Activated T-helper 1 cell treated with anti-CD3 and anti-CD28 coated beads, Interleukin-12 subunit alpha, Interleukin-12 subunit beta, Interleukin-2, Interleukin-4 antibody, amounts not matched to agents 30 ng/mL and 10 ng/mL and 1 ng/mL, durations not matched to agents 14 hours and 24 hours and 36 hours (primary cell): ENCODE measurements at regions of chr4 and their contacts with region 1.

Region 1: GRCh38 chr4:112765317-112765975 is 128.5 kb downstream of the LARP7 start:
- DNase-seq: no peak
- H3K4me3 Mint-ChIP-seq: no peak overlapping the region
- H3K27ac Mint-ChIP-seq: no peak overlapping the region
- H3K4me1 Mint-ChIP-seq: peaks cover 5% of the 10 kb centered on the region
- H3K27me3 Mint-ChIP-seq: peaks cover 6% of the 10 kb centered on the region

Region 2: GRCh38 chr4:112099701-112100297 is 665.6 kb before region 1 on chr4:
- intact Hi-C with region 1: loop called (anchors 5 kb)
- DNase-seq: no peak
- H3K4me3 Mint-ChIP-seq: no peak overlapping the region
- H3K27ac Mint-ChIP-seq: no peak overlapping the region
- H3K4me1 Mint-ChIP-seq: peaks cover 20% of the 10 kb centered on the region
- H3K27me3 Mint-ChIP-seq: peaks cover 22% of the 10 kb centered on the region

Region 3: DNA sequence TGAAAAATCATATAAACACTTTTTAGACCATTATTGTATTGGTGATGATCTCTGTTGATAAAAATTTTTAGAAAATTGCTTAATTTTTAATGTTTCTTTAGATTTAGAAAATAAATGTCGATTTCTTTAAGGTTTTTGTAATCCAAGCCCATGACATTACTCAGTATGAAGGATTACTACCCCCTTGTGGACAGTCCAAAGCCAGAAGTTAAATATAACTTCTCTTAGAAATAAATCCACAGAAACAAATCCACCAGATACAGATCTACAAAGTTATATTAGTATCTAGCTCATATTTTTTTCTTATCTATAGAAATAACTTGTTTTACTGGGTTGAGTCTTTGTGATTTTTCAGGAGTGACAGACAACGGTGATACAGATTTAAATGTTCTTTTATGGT is 498.6 kb before region 1 on chr4:
- intact Hi-C with region 1: no loop called
- DNase-seq: no peak
- H3K4me3 Mint-ChIP-seq: no peak overlapping the region
- H3K27ac Mint-ChIP-seq: no peak overlapping the region
- H3K4me1 Mint-ChIP-seq: peaks cover 14% of the 10 kb centered on the region
- H3K27me3 Mint-ChIP-seq: no peaks in the 10 kb centered on the region

Region 4: DNA sequence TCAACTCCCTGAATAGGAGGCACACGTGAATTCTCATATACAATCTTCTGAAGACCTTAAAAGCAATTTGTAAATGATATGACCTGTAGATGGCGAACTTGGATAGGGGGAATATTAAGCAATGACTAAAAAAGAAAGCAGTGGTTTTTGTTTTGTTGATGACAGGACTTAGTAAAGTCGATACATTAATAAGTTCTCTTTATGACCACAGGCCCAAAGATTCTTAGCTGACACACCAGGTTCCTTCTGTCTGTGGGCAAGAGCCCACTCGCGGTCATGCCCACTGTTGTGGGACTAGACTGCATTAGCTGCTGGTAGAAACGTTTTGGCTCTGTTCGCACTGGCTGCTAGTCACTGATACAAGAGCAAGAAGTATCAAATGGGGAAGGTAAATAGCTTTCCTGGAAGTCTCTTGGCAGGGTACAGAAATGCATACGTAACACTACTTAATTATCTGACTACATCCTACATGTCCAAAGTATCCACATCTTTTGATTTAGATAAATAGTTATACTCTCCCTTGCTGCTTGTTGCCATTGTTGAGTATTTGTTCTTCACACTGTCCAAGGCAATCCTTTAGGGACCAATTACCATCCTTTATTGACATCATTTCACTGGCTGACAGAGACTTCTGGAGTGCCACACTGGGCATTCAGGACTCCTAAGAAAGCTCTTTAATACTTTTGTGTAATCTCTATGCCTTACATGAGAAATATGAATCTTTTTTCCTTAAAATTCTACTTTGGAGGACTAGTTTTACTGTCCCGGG is 437.3 kb before region 1 on chr4:
- intact Hi-C with region 1: loop called (anchors 1 kb)
- DNase-seq: no peak
- H3K4me3 Mint-ChIP-seq: no peak overlapping the region
- H3K27ac Mint-ChIP-seq: no peak overlapping the region
- H3K4me1 Mint-ChIP-seq: peaks cover 8% of the 10 kb centered on the region
- H3K27me3 Mint-ChIP-seq: no peaks in the 10 kb centered on the region

Region 5: GRCh38 chr4:112706840-112707207 is 58.6 kb before region 1 on chr4:
- intact Hi-C with region 1: loop called (anchors 1 kb)
- DNase-seq: no peak
- H3K4me3 Mint-ChIP-seq: peak overlapping the region; percentile 92
- H3K27ac Mint-ChIP-seq: no peak overlapping the region
- H3K4me1 Mint-ChIP-seq: peaks cover 23% of the 10 kb centered on the region
- H3K27me3 Mint-ChIP-seq: peaks cover 54% of the 10 kb centered on the region

Region 6: GRCh38 chr4:112938461-112939058 is 173.1 kb after region 1 on chr4:
- intact Hi-C with region 1: loop called (anchors 1 kb)
- DNase-seq: no peak
- H3K4me3 Mint-ChIP-seq: no peak overlapping the region
- H3K27ac Mint-ChIP-seq: no peak overlapping the region
- H3K4me1 Mint-ChIP-seq: no peaks in the 10 kb centered on the region
- H3K27me3 Mint-ChIP-seq: no peaks in the 10 kb centered on the region